Cardiac septum (tissue), 1 donor: ENCODE measurements at regions of chr1 and their contacts with region 1.

Region 1: DNA sequence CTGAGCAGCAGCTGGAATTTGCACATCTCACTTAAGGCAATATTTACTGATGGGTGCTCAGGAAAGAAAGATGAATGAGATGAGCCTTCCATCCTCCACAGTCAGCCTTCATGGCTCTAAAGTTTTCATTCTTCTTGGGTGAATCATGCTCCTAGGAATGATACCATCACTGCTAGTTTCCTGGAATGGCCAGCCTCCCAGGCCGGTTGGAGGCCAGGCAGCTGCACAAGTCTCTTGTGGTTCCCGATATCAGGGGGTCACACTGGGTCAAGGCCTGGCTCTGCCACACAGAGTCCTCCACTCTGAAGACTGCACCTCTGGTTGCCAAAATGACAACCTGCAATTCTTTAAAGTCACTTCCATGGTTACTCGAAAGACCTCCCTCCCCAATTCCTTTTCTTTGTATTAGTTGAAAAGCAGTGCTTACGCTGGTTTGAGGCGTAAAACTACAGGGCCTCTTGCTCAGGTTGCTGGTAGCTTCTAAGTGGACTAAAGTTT is 46.2 kb upstream of the PALMD start:
- DNase-seq: no peak

Region 2: DNA sequence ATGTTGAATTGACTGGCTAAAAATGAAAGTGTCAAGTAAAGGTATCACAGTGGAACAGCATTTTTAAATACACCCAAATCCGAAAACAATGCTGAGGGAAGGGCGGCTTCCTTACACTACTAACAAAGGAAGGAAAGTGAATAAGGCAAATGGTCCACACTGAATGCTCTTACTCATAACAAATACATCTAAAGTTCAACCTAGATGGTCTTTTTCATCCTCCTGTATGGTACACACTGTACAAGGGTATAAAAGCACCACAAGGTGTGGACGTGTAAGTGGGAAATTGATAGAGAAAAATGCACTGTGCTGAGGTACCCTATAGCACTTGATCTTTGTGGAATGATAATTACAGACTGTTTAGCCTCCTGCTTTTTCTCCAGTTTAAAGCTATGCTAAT is 39.1 kb after region 1 on chr1:
- intact Hi-C with region 1: loop called (anchors 2 kb)
- DNase-seq: no peak

Region 3: DNA sequence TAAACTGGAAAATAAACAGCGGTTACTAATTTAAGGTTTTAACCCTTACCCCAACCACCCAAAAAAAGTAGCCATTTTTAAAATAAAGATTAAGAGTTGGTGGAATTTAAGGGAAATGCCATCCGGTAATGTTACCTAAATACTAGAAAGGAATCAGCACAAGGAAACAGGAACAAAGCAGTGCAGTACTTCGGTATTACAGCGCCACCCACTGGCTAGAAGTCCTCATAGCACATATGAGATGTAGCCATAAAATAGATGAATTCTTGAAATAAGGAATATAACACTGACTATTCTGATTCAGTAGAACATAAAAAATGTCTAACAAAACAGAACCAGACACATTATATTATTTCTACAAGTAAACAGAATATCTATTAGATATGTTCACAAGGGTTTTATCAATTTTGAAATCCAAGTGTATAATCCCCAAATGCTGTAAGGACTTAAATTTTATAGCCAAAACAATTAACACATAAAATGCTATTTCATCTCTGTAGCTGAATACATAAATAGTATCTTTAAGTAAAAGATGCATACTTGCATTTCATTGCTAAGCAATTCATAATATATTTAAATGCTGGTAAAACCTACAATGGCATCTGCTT is 107.9 kb after region 1 on chr1:
- intact Hi-C with region 1: no loop called
- DNase-seq: no peak